GM12878 (cell line): ENCODE measurements at regions of chr10 and their contacts with region 1.

Region 1: GRCh38 chr10:17643755-17644484 is at the start of gene STAM:
- DNase-seq: peak; percentile 81
- ATAC-seq: peak; percentile 88
- H3K4me3 ChIP-seq: peak within 1 kb of the TSS; percentile 96
- H3K27ac ChIP-seq: peak within 1 kb of the TSS; percentile 99
- H3K4me1 ChIP-seq: peaks cover 5% of the 10 kb centered on the region; the same call in 1 of the 2 replicates
- H3K27me3 ChIP-seq: no peaks in the 10 kb centered on the region
- CTCF ChIP-seq: no peak
- EP300 ChIP-seq: no peak
- POLR2A ChIP-seq: peak; percentile 85
- RAD21 ChIP-seq: no peak
- polyA plus RNA-seq, gene STAM: 8.8 to 9.6 TPM

Region 2: DNA sequence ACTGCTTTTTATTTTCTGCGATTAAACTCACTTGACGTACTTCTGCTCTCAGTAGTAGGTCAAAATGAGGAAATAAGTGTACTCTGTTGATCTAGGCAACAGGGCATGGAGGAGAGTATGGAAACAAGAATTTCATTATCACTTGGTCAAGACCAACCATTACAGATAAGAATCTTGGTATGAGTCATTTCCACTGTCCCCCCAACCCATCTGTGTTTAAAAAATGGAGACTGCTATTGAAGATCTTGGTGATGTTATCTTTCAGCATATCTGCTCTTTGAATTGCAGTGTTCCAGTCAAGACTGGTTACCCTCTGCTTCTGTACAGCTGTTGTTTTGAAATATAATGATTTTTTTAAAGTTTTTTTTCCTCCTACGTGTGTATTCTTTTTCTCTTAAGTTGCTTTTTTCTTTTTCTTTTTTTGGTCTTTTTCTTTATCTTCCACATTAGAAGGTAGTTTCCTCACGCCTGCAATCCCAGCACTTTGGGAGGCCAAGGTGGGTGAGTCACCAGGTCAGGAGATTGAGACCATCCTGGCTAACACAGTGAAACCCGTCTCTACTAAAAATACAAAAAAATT is 11.7 kb after region 1 on chr10:
- CTCF ChIA-PET with region 1: interaction called, 12 read pairs
- POLR2A ChIA-PET with region 1: interaction called, 9 read pairs
- RAD21 ChIA-PET with region 1: interaction called, 11 read pairs
- SMC1A ChIA-PET with region 1: interaction called, 63 read pairs
- in situ Hi-C with region 1: no loop called
- intact Hi-C with region 1: no loop called
- DNase-seq: peak; percentile 64
- ATAC-seq: peak; percentile 92
- H3K4me3 ChIP-seq: no peak overlapping the region; the same call in 1 of the 2 replicates
- H3K27ac ChIP-seq: peak overlapping the region; percentile 49
- H3K4me1 ChIP-seq: peaks cover 11% of the 10 kb centered on the region; the same call in 1 of the 2 replicates
- H3K27me3 ChIP-seq: no peaks in the 10 kb centered on the region
- CTCF ChIP-seq: no peak
- EP300 ChIP-seq: peak; percentile 59 to 76; a peak in 2 of 4 replicates
- POLR2A ChIP-seq: no peak
- RAD21 ChIP-seq: no peak

Region 3: GRCh38 chr10:17662193-17663138 is 18.5 kb after region 1 on chr10:
- CTCF ChIA-PET with region 1: interaction called, 4 read pairs
- POLR2A ChIA-PET with region 1: interaction called, 9 read pairs
- RAD21 ChIA-PET with region 1: interaction called, 4 read pairs
- SMC1A ChIA-PET with region 1: interaction called, 63 read pairs
- in situ Hi-C with region 1: no loop called
- intact Hi-C with region 1: no loop called
- DNase-seq: no peak
- ATAC-seq: peak; percentile 31; the same call in 2 of the 3 replicates
- H3K4me3 ChIP-seq: no peak overlapping the region
- H3K27ac ChIP-seq: no peak overlapping the region
- H3K4me1 ChIP-seq: no peaks in the 10 kb centered on the region
- H3K27me3 ChIP-seq: no peaks in the 10 kb centered on the region
- CTCF ChIP-seq: no peak
- EP300 ChIP-seq: no peak
- POLR2A ChIP-seq: no peak
- RAD21 ChIP-seq: no peak

Region 4: DNA sequence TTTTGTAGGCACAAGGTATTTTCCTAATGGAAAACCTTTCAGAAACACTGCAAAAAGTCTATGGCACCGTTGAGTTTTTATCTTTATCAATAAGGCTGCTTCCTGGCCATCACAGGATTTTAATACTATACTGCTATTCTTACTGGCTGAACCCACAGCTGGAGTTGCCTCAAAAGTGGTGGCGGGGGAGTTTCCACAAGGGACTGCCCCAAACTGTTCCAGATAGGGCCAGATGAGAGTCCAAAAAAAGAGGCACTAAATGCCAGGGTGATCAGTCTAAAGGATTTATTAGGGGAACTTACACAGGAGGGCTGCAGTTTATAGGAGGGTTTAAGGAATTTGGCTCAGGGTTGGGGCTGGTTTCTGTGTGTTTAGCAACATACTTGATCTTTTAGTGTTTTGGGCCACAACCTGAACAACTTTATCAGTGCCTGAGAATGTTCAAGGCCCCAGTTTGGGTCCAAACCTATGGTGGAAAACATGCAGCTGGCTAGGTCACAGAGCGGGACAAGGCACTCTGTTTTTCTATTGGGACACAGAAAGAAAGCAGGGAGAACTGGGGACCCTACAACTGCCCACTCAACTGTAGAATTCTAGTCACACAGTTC is 41.4 kb after region 1 on chr10:
- CTCF ChIA-PET with region 1: interaction called, 4 read pairs
- POLR2A ChIA-PET with region 1: interaction called, 4 read pairs
- RAD21 ChIA-PET with region 1: interaction called, 14 read pairs
- SMC1A ChIA-PET with region 1: interaction called, 17 read pairs
- in situ Hi-C with region 1: no loop called
- intact Hi-C with region 1: loop called (anchors 1 kb)
- DNase-seq: peak; percentile 28
- ATAC-seq: peak; percentile 89
- H3K4me3 ChIP-seq: no peak overlapping the region
- H3K27ac ChIP-seq: peak overlapping the region; percentile 83
- H3K4me1 ChIP-seq: peaks cover 12% of the 10 kb centered on the region
- H3K27me3 ChIP-seq: no peaks in the 10 kb centered on the region
- CTCF ChIP-seq: no peak
- EP300 ChIP-seq: peak in 1 of 2 experiments; percentile 50; a peak in 1 of 4 replicates
- POLR2A ChIP-seq: no peak
- RAD21 ChIP-seq: no peak

Region 5: DNA sequence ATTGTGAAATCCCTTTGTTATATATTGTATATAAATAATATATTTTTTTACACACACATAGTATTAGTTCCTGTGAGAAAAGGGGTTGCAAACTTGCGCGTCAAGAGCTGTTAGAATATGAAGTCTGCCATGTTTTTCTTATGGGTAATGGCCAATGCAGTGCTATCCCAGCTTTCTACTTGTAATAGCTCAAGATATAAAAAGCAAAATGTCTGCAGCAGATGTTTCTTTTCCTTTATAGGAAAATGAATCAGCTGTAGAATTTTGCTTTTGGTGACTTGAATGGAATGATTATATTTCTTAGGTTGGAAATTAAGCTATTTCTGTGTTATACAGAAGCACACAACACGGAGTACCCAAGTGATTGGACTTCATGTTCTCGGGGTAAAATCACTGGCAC is 54.8 kb after region 1 on chr10:
- CTCF ChIA-PET with region 1: interaction called, 10 read pairs
- POLR2A ChIA-PET with region 1: no interaction called
- RAD21 ChIA-PET with region 1: no interaction called
- SMC1A ChIA-PET with region 1: interaction called, 12 read pairs
- in situ Hi-C with region 1: no loop called
- intact Hi-C with region 1: no loop called
- DNase-seq: no peak
- ATAC-seq: no peak
- H3K4me3 ChIP-seq: no peak overlapping the region
- H3K27ac ChIP-seq: no peak overlapping the region
- H3K4me1 ChIP-seq: no peaks in the 10 kb centered on the region
- H3K27me3 ChIP-seq: no peaks in the 10 kb centered on the region
- CTCF ChIP-seq: no peak
- EP300 ChIP-seq: no peak
- POLR2A ChIP-seq: no peak
- RAD21 ChIP-seq: no peak

Region 6: GRCh38 chr10:17703706-17704105 is 59.8 kb after region 1 on chr10:
- CTCF ChIA-PET with region 1: interaction called, 10 read pairs
- POLR2A ChIA-PET with region 1: interaction called, 3 read pairs
- RAD21 ChIA-PET with region 1: interaction called, 3 read pairs
- SMC1A ChIA-PET with region 1: interaction called, 12 read pairs
- in situ Hi-C with region 1: no loop called
- intact Hi-C with region 1: no loop called
- DNase-seq: no peak
- ATAC-seq: no peak
- H3K4me3 ChIP-seq: no peak overlapping the region
- H3K27ac ChIP-seq: no peak overlapping the region
- H3K4me1 ChIP-seq: no peaks in the 10 kb centered on the region
- H3K27me3 ChIP-seq: no peaks in the 10 kb centered on the region
- CTCF ChIP-seq: no peak
- EP300 ChIP-seq: no peak
- POLR2A ChIP-seq: no peak
- RAD21 ChIP-seq: no peak